ENCODE measurements at regions of chr9 and their contacts with region 1.

Region 1: DNA sequence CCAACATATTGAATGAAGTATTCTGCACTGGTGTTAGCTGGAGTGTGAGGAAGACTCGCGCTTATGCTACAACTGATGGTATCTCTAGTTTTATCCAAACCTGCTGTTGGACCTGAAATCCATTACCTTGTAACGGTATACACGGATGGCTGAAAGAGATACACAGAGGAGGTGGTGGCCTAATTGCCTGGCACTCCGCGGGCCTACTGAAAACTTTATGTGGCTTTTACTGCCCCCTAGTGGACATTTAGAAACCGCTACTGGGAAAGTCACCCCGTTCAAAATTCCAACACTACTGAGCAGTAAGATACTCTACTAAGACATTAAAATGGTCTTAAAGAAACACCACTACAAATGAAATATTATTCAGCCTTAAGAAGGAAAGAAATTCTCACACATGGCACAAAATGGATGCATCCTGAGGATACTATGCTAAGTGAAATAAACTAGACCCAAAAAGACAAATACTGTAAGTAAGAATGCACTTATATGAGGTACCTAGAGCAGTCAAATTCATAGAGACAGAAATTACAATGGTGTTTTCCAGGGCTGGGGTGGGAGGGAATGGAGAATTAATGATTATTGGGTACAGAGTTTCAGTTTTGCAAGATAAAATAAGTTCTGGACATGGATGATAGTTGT is 100.4 kb downstream of the TTLL11 start:
- DNase-seq: peak; percentile 49 to 59
- ATAC-seq: peak; percentile 87

Region 2: DNA sequence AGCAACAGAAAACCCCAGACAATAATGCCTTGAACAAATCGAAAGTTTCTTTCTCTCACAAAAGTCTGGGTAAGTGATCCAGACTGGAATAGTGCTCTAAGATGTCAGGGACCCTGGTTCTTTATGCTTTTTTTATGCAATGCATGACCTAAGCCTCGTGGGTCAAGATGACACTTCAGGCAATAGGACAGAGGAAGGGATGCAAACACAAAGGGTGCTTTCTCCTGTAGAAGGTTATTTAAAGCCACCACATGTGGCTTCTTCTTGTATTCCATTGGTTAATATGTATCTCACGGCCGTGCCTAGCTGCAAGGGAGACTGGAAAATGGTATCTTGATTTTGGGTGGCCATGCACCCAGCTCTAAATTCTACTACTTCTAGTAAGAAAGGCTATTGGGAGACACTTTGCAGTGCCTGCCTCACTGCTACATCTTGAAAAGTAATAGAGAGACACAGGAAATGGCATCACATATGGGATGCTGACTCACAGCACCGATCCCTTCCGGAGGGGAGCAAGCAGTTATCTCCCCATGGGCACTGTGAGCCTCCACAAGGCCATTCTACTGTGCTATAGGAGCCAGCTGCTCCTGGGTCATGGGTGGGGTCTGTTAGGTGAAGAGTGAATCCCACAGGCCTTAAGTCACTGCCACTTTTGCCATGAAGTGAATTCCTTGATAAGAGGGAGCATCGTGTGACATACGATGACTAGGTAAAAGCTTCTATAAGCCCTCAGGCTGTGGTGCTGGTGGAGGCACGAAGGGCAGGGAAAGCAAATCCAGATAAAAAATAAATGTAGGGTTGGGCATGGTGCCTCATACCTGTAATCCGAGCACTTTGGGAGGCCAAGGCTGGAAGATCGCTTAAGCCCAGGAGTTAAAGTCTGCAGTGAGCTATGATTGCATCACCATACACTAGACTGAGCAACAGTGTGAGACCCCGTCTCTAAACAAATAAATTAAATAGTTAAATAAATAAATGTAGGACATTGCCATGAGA is 758.5 kb before region 1 on chr9:
- intact Hi-C with region 1: no loop called
- DNase-seq: no peak
- ATAC-seq: no peak

Region 3: DNA sequence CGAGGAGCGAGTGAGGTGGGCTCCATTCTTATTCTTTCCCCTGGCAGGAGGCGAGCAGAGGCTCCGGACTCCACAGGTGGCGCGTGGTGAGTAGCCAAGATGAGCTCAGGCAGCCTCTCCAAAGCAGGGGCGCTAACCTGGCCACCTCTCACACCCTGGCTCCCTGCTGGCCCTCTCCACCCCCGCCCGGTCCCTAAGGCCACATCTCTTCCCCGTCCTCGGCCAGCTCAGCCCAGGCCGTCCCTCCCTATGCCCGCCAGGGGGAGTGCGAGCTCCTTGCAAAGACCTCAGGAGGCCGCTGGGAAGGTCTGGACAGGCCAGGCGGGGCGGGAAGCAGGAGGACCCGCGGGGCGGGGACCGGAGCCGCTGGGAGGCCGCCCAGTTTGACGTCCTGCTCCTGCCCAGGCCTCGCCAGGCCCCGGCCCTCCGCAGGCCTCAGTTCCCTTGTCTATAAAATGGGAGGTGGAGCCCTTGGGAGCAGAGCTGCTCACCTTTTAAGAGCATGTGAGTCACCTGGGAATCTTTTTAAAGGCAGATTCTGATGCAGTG is 446.7 kb before region 1 on chr9:
- intact Hi-C with region 1: loop called in 1 of 2 experiments (anchors 10 kb)
- DNase-seq: peak; percentile 93 to 95
- ATAC-seq: peak; percentile 95

Region 4: DNA sequence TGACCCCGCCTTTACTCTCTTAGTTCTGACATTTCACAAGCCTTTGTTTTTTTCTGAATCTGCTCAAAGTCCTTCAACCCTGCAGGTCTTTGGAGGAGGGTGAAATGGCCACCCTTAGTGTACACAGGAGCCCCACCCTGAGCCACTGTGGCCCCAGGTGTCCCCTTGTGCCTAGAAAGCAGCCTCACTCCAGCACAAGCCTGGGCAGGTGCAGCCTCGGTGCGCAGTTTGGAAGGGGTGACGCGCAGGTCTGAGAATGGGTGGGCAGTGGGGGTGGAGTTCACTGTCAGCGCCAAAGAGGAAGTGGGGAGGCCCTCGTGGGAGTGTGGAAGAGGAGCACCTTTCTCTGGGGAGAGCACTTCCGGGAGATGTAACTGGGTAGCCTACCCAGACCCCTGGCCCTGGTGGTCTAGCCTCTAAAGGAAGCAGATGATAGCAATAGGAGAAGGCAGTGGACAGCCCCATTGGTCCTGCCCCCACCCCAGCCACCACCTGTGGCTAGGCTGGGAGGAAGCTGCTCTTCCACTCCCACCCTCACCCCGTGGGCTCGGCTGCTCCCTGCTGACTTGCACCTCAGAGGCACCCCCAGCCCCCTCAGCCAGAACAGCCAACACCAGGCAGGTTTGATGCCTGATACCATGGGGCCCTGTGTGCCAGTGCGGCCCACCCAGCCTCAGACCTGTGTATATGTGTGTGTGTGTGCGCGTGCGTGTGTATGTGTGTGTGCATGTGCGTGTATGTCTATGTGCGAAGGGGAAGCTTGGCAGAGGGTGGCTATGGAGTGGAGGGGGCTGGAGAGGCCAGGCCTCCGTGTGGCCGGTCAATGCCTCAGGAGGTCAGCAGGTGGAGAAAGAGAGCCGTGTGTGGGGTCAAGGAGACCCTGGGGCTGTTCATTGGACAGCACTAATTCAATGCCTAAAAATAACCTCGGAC is 358.1 kb before region 1 on chr9:
- intact Hi-C with region 1: loop called in 1 of 2 experiments (anchors 10 kb)
- DNase-seq: no peak
- ATAC-seq: peak; percentile 71

Region 5: GRCh38 chr9:121686930-121687541 is 305.7 kb before region 1 on chr9:
- intact Hi-C with region 1: loop called in 1 of 2 experiments (anchors 10 kb)
- DNase-seq: peak; percentile 75 to 90
- ATAC-seq: peak; percentile 79

Region 6: GRCh38 chr9:121765021-121765950 is 227.4 kb before region 1 on chr9:
- intact Hi-C with region 1: loop called in 1 of 2 experiments (anchors 10 kb)
- DNase-seq: no peak
- ATAC-seq: no peak

Region 7: DNA sequence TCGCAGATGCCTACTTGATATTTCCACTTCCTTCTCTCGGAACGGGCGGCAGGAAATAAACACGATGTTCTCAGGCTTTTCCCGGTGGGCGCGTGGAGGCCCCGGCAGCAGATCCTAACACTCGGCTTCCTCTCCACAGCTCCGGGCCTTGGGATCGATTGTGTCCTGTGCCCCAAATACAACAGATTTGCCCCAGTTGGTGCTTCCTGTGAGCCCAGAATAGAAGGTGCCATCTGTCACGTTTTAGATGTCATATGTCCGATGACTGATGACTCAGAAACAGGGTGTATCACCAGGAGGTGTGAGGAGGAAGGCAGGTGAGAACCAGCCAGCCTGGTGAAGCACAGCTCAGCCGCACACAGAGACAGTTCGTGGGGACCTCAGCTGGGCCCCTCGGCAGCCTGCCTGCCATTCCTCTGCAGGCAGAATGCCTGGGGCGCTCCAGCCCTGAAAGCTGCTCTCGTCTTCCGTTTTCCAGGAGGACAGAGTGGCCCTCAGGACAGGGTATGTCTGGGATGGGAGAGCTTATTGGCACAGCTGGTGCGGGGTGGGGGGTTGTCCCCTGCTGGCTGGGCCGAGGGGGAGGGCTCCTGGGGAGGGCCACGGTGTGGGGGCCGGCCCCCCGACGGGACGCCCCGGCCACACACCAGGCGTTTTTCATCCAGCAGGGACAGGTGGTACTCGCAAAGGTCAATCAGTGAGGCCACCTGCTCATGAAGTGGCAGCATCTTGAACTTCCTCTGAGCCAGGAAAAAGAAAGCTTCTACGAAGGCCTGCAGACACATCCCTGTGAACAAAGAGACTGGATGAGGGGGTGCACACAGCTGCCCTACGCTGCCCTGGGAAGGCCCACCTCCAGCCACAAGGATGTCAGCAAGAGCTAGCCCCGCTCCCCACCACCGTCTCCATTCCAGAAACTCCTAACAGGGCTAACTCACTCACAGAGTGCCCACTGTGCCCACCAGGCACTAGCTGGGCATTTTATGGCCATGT is 170.3 kb before region 1 on chr9:
- intact Hi-C with region 1: no loop called
- DNase-seq: no peak
- ATAC-seq: no peak